AG04449 (cell line): ENCODE measurements at regions of chr15 and their contacts with region 1.

Region 1: DNA sequence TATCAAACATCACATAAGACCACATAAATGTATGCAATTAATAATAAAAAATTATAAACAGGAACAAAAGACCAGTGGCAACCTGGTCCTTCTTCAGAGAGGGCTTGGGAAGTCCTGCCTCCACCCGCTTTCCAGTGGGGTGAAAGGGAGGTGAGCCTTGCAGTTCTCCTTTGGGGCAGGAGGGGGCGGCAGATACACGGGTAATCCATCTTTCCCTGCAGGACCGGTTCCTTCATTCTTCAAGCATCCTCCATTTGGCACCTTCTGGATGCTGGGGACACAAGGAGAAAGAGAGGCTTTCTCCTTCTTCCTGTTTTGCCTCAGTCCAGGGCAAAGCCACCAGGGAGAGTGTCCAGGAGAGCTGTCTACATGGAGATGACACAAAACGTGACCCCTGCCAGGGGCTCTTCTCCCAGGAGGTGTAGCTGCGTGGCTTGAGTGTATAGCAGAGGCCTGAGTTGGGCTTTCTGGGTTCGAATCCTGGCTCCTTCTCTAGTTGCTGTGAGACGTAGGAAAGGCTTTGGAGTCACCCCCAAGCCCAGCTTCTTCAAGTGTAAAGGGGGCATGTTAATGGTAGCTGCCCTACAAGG is 23.2 kb downstream of the RPLP1 start:
- DNase-seq: no peak
- H3K4me3 ChIP-seq: no peak overlapping the region
- CTCF ChIP-seq: peak; percentile 92

Region 2: GRCh38 chr15:69462493-69463181 is 13.2 kb before region 1 on chr15:
- CTCF ChIA-PET with region 1: interaction called, 80 read pairs
- POLR2A ChIA-PET with region 1: no interaction called
- DNase-seq: peak; percentile 96
- H3K4me3 ChIP-seq: peak overlapping the region; percentile 60
- CTCF ChIP-seq: peak; percentile 93

Region 3: GRCh38 chr15:69489073-69489571 is 13.3 kb after region 1 on chr15:
- CTCF ChIA-PET with region 1: interaction called, 69 read pairs
- POLR2A ChIA-PET with region 1: no interaction called
- DNase-seq: no peak
- H3K4me3 ChIP-seq: no peak overlapping the region
- CTCF ChIP-seq: no peak